Ovary (tissue), 10 donors: ENCODE measurements at regions of chr20 and their contacts with region 1.

Region 1: DNA sequence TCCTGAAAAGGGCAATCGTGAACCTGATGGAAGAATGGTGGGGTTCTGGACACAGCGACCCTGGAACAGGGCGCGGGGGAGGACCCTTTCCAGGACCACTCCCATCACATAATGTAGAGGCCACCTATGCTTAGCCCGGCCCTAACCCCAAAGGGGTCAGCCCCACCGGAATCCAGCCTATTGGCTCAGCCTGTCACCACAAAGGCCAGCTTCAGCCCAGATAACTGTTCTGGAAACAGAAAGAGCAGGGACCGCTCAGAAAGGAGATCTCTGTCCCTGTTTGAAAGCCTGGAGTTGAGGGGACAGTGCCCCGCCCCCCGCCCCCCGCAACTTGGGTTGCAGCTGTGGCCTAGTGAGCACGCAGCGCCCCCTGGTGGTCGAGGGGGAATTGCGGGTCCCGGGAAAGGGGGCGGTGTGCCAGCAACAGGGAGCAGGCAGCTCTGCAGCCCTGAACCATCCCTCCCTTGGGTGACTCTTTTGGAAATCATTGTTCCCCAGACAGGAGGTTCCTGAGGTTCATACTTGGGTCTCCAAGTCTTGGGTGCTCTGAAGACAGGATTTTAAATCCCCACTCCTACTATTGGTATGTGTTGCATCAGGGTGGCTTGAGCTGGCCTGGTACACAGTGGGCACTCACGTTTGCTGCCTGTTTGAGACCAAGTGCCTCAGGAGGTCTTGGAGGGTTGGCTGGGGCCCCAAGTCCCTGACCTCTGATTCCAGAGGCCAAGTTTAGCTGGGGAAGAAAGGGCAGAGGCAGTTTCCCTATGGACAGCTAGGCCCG is 1.5 kb downstream of the SIGLEC1 start:
- DNase-seq: peak; percentile 66 to 90 (median 82)
- H3K4me3 ChIP-seq: no peak overlapping the region
- H3K27ac ChIP-seq: no peak overlapping the region
- H3K4me1 ChIP-seq: no peaks in the 10 kb centered on the region
- H3K27me3 ChIP-seq: no peaks in the 10 kb centered on the region
- CTCF ChIP-seq: peak; percentile 97 to 98 (median 97)
- EP300 ChIP-seq: no peak
- POLR2A ChIP-seq: no peak

Region 2: GRCh38 chr20:3679749-3680700 is 30.9 kb before region 1 on chr20:
- intact Hi-C with region 1: loop called (anchors 2 to 5 kb)
- DNase-seq: peak; percentile 51 to 79 (median 76)
- H3K4me3 ChIP-seq: peak overlapping the region; percentile 62
- H3K27ac ChIP-seq: peak overlapping the region; percentile 63 to 76
- H3K4me1 ChIP-seq: peaks cover 16% of the 10 kb centered on the region
- H3K27me3 ChIP-seq: no peaks in the 10 kb centered on the region
- CTCF ChIP-seq: no peak
- EP300 ChIP-seq: no peak
- POLR2A ChIP-seq: no peak